ENCODE measurements at regions of chr5 and their contacts with region 1.

Region 1: DNA sequence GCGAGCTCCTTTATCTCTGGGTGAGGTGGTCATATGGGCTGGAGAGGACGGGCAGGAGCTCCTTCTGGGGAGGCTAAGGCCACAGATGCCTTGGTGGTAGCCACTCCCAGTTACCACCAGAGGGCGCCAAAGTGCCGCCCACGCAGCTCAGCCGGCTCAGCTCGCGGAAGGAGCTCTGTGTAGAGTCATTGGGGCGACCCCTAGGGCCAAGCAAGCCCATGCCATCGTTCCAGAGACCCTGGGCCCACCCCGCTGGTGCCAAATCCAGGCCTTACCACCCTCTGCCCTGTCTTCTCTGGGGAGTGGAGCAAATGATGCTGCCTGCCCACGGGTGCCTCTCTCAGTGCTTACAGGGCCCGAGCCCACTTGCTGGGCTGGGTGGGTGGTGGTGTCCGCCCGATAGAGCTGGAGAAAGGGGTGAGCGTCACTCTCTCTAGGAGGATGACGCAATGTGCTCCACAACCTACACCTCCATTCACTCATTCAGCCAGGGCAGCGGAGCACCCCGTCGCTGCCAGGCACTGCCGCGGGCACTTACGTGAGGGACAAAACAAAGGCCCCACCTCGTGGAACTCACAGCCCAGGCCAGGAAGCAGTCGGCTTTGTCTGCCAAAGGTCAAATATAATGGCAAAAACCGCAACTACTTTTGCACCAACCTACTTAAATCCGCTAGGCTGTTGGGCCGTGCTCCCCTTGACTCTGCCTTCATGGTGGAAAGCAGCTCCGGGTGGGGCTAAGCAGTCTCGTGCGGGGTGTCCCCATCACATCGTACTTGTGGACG is 13.8 kb downstream of the TSPAN17 start:
- DNase-seq: peak; percentile 67 to 84 (median 72)
- H3K4me3 ChIP-seq: no peak overlapping the region
- H3K4me3 Mint-ChIP-seq: peak overlapping the region in 4 of 7 donors; percentile 8 to 68 (median 31)
- H3K27ac ChIP-seq: no peak overlapping the region
- H3K27ac Mint-ChIP-seq: peak overlapping the region in 5 of 8 donors; percentile 34 to 68 (median 56)
- H3K4me1 ChIP-seq: peaks cover 24% of the 10 kb centered on the region
- H3K4me1 Mint-ChIP-seq: peaks cover 27 to 43% (median 34%) of the 10 kb centered on the region in 3 donors
- H3K27me3 ChIP-seq: no peaks in the 10 kb centered on the region
- H3K27me3 Mint-ChIP-seq: peaks cover 14 to 21% of the 10 kb centered on the region in 2 donors

Region 2: DNA sequence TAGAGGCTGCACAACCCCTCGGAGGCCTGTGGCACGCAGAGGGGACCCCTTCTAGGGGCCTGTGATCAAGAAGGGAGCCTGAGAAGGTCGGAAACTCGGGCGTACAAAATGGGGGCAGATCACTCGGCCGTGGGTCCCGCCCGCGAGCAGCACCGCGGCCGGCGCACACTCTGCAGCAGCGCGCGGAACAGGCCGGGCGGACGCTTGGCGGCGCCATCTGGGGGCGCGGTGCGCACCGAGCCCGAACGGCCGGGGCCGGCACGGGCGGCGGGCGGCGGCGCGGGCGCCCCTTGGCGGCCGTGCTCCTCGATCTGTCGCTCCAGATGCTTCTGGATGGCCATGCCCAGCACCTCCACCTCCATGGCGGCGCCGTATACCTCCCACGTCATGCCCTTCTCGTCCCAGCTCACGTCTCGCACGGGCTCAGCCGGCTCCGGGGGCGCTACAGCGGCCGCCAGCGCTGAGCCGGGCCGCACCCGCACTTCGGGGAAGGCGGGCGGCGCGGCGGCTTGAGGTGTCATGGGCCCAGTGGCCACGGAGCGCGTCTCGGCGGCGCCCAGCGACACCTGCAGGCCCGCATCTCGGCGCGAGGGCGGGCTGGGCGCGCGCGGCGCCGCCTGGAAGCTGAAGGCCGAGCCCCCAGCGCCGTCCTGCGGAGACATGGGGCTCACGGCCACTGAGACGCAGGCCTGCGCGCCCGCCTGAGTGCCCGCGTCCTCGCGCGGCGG is 64.2 kb before region 1 on chr5:
- CTCF ChIA-PET with region 1: interaction called, 10 read pairs
- POLR2A ChIA-PET with region 1: no interaction called
- DNase-seq: peak; percentile 44 to 76 (median 70)
- H3K4me3 ChIP-seq: peak overlapping the region; percentile 37
- H3K4me3 Mint-ChIP-seq: peak overlapping the region; percentile 64 to 84 (median 78)
- H3K27ac ChIP-seq: no peak overlapping the region
- H3K27ac Mint-ChIP-seq: peak overlapping the region in 2 of 8 donors; percentile 52 to 70
- H3K4me1 ChIP-seq: peaks cover 6% of the 10 kb centered on the region
- H3K4me1 Mint-ChIP-seq: peaks cover 3 to 9% (median 6%) of the 10 kb centered on the region in 3 donors
- H3K27me3 ChIP-seq: no peaks in the 10 kb centered on the region
- H3K27me3 Mint-ChIP-seq: peaks cover 2 to 4% of the 10 kb centered on the region in 2 donors

Region 3: DNA sequence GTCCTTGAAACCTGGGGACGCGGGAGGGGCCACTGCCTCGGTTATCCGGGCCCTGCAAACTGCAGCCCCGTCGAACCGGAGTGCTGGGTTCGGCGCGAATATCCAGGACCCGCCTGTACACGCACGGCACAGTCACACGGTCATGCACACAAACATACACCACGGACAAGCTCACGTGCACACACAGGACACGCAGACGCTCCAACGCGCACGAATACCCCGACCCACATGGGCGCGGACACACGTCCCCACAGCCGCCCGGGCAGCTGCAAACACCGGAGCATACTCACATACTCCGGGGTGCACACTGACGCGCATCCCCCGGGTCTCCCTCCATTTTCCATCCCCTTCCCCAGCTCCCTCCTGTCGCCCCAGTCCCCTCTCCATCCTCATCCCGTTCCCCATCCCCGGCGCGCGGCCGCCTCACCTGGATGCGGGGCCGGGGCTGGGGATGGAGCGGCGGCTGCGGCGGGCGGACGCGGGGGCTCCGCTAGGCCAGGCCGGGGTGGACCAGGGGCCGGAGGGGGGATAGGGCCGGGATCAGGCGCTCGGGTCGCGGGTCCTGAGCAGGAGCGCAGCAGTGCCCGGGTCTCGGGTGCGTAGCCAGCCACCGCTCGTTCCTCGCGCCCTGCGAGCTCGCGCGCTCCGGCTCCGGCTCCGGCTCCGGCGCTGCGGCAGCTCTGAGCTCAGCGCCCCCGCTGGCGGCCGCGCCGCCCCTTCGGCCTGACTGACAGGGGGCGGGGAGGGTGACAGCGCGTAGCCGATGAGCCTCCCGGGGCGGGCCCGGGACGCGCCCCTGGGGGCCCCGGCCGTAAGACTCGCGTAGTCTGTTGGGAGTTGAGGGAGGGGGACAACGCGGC is 31.0 kb before region 1 on chr5 and contains the starts of genes EIF4E1B and SNCB:
- CTCF ChIA-PET with region 1: interaction called, 10 read pairs
- POLR2A ChIA-PET with region 1: interaction called, 5 read pairs
- DNase-seq: peak in 3 of 5 donors; percentile 39 to 64 (median 49)
- H3K4me3 ChIP-seq: peak within 1 kb of the TSS; percentile 32
- H3K4me3 Mint-ChIP-seq: peak within 1 kb of the TSS; percentile 62 to 86 (median 71)
- H3K27ac ChIP-seq: no peak within 1 kb of the TSS
- H3K27ac Mint-ChIP-seq: peak within 1 kb of the TSS in 1 of 8 donors; percentile 69
- H3K4me1 ChIP-seq: peaks cover 6% of the 10 kb centered on the region
- H3K4me1 Mint-ChIP-seq: peaks cover 7 to 23% (median 14%) of the 10 kb centered on the region in 3 donors
- H3K27me3 ChIP-seq: peaks cover 44% of the 10 kb centered on the region
- H3K27me3 Mint-ChIP-seq: peaks cover 43 to 76% of the 10 kb centered on the region in 2 donors
- total RNA-seq, gene EIF4E1B: not detected
- total RNA-seq, gene SNCB: not detected

Region 4: DNA sequence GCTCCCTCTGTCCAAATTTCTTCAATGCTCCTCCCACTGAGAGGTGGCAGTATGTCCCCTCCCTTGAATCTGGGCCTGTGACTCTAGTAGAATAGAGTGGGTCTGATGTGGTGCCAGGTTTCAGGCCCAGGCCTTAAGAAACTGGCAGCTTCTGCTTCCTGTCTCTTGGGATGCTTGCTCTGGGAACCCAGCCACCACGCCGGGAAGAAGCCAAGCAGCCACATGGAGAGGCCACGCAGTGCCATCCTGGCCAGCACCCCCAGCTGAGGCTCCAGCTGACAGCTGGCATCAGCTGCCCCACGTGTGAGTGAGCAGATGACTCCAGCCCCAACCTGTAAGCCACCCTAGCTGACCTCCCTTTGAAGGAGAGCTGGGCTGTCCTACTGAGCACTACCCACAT is 21.1 kb before region 1 on chr5:
- CTCF ChIA-PET with region 1: interaction called, 108 read pairs
- POLR2A ChIA-PET with region 1: no interaction called
- DNase-seq: no peak
- H3K4me3 ChIP-seq: no peak overlapping the region
- H3K4me3 Mint-ChIP-seq: no peak overlapping the region
- H3K27ac ChIP-seq: no peak overlapping the region
- H3K27ac Mint-ChIP-seq: peak overlapping the region in 1 of 8 donors; percentile 6
- H3K4me1 ChIP-seq: no peaks in the 10 kb centered on the region
- H3K4me1 Mint-ChIP-seq: no peaks in the 10 kb centered on the region
- H3K27me3 ChIP-seq: peaks cover 6% of the 10 kb centered on the region
- H3K27me3 Mint-ChIP-seq: peaks cover 6 to 25% of the 10 kb centered on the region in 2 donors

Region 5: DNA sequence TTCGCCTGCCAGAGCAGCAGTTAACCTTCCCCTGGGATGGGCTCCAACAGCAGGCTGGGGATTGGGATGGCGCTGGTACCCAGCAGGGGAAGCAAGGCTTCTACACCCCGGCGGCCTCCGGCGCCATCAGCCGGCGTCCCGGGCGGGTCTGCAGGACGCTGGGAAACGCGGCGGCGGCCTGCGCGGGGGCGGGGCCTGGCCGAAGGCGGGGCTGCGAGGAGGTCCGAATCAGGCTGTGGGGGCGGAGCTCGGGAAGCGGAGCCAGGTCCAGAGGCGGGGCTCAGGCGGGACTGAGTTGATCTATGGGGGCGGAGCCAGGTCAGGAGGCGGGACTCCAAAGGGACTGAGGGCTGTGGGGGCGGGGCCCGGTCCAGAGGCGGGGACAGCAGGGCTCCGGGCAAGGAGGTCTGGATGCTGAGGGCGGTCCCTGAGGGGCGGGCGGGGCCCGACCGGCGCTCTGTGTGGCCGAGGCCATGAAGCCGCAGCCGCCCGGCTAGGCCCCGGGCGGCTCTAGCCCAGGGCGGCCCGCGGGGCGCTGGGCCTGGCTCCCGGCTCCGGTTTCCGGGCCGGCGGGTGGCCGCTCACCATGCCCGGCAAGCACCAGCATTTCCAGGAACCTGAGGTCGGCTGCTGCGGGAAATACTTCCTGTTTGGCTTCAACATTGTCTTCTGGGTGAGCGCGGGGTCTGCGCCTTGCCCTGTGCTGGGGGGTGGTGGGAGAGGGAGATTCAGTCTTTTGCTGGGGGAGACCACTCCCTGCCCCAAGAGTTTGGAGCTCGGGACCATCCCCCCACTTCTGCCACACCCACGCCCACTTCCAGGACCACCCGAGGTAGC is 13.8 kb before region 1 on chr5 and contains the start of gene TSPAN17:
- CTCF ChIA-PET with region 1: interaction called, 108 read pairs
- POLR2A ChIA-PET with region 1: interaction called, 8 read pairs
- DNase-seq: peak; percentile 92 to 99 (median 98)
- H3K4me3 ChIP-seq: peak within 1 kb of the TSS; percentile 83
- H3K4me3 Mint-ChIP-seq: peak within 1 kb of the TSS; percentile 74 to 92 (median 90)
- H3K27ac ChIP-seq: peak within 1 kb of the TSS; percentile 69
- H3K27ac Mint-ChIP-seq: peak within 1 kb of the TSS; percentile 82 to 95 (median 90)
- H3K4me1 ChIP-seq: peaks cover 47% of the 10 kb centered on the region
- H3K4me1 Mint-ChIP-seq: peaks cover 48 to 59% (median 54%) of the 10 kb centered on the region in 3 donors
- H3K27me3 ChIP-seq: no peaks in the 10 kb centered on the region
- H3K27me3 Mint-ChIP-seq: no peaks in the 10 kb centered on the region
- total RNA-seq, gene TSPAN17: 37.4 to 38.8 TPM

Region 6: DNA sequence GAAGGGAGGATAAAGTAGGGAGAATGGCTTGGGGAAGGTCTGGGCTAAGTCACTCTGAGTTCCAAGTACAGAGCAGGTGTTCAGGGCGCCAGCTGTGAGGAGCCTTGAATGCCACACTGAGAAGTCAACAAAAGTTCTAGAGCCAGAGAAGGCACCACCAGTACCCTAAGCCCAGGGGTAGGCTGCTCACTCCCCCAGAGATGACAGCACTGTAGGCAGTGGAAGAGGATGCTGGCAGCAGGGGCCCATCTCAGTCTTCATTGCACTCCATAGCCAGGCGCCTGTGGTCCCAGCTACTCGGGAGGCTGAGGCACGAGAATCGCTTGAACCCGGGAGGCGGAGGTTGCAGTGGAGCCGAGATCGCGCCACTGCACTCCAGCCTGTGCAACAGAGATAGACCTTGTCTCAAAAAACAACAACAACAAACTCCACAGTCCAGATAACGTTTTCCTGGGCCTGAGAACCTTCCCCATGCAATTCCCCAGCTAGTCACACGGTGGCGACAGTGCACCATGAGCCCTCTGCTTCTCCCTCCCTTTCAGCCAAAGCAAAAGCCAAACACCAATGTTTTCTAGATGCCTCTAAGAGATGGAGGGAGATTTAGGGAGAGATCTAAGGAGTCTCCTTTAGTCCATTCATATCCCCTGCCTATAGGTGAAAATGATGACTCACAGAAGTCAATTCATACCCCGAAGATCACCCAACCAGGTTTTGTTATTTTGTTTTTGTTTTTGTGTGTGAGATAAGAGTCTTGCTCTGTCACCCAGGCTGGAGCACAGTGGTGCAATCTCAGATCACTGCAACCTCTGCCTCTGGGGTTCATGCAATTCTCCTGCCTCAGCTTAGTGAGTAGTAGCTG is 452.7 kb after region 1 on chr5:
- CTCF ChIA-PET with region 1: interaction called, 14 read pairs
- POLR2A ChIA-PET with region 1: no interaction called
- DNase-seq: peak; percentile 65 to 82 (median 70)
- H3K4me3 ChIP-seq: no peak overlapping the region
- H3K4me3 Mint-ChIP-seq: no peak overlapping the region
- H3K27ac ChIP-seq: no peak overlapping the region
- H3K27ac Mint-ChIP-seq: peak overlapping the region in 1 of 8 donors; percentile 1
- H3K4me1 ChIP-seq: peaks cover 16% of the 10 kb centered on the region
- H3K4me1 Mint-ChIP-seq: peaks cover 19 to 24% (median 24%) of the 10 kb centered on the region in 3 donors
- H3K27me3 ChIP-seq: no peaks in the 10 kb centered on the region
- H3K27me3 Mint-ChIP-seq: no peaks in the 10 kb centered on the region